Sigmoid colon (tissue), 7 donors: ENCODE measurements at regions of chr18 and their contacts with region 1.

Region 1: GRCh38 chr18:11851146-11851805 is at the start of gene CHMP1B:
- DNase-seq: peak; percentile 99
- H3K4me3 ChIP-seq: peak within 1 kb of the TSS; percentile 72 to 94 (median 88)
- H3K27ac ChIP-seq: peak within 1 kb of the TSS; percentile 93 to 99 (median 94)
- H3K4me1 ChIP-seq: peaks cover 0 to 34% (median 26%) of the 10 kb centered on the region in 4 donors
- H3K27me3 ChIP-seq: no peaks in the 10 kb centered on the region
- CTCF ChIP-seq: no peak
- EP300 ChIP-seq: peak in 2 of 4 donors; percentile 59 to 86
- POLR2A ChIP-seq: peak; percentile 98 to 99
- total RNA-seq, gene CHMP1B: 32.1 to 47.1 (median 38.2) TPM

Region 2: DNA sequence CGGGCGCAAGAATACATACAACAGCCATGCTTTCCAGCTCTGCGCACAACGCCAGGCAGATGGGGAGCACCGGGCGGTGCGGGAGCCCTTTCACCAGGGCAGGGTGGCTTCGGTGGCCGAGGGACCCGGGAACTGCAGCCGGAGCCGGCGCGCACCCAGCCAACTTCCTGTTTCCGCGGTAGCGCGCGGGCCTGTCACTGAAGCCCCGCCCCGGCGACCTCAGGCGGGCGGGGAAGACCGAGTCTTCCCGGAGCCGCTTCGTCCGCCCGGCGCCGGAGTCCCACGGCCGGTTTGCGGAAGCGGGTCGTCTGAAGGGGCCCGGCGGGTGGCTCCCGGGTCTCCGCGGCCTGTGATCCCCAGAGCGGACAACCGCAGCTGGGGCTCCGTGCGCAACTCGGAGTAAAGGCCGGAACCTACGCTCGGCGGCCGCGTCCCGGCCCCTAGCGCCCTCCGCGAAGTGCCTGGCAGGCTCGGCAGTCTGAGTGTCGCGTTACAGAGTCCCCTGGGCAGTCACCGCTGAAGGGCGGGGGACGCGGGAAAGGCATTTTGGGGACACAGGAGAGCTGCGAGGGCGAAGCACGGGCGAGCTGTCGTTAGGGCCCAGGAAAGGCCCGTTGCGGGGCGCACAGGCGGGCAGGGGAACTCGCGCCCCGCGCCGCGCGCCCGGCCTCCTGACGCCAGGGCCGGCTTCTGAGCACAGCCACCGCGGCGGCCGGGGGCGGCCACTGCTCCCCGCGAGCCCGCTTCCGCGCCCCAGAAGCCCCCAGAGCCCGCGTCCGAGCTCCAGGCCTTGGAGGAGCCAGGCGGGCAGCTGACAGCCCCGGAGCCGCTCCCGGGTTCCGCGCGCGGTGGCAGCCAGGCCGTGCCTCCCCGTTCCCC is 57.1 kb after region 1 on chr18 and contains the start of gene MPPE1:
- intact Hi-C with region 1: loop called (anchors 1 kb)
- DNase-seq: peak; percentile 94
- H3K4me3 ChIP-seq: peak within 1 kb of the TSS; percentile 64 to 88 (median 75)
- H3K27ac ChIP-seq: peak within 1 kb of the TSS; percentile 95 to 99 (median 98)
- H3K4me1 ChIP-seq: peaks cover 0 to 19% (median 18%) of the 10 kb centered on the region in 4 donors
- H3K27me3 ChIP-seq: no peaks in the 10 kb centered on the region
- CTCF ChIP-seq: no peak
- EP300 ChIP-seq: no peak
- POLR2A ChIP-seq: peak; percentile 90 to 92
- total RNA-seq, gene MPPE1: 16.4 to 32.7 (median 22.1) TPM

Region 3: GRCh38 chr18:12038639-12039417 is 187.6 kb after region 1 on chr18:
- intact Hi-C with region 1: loop called (anchors 5 kb)
- DNase-seq: peak; percentile 91
- H3K4me3 ChIP-seq: peak overlapping the region; percentile 31 to 67 (median 52)
- H3K27ac ChIP-seq: peak overlapping the region in 3 of 4 donors; percentile 29 to 54 (median 35)
- H3K4me1 ChIP-seq: peaks cover 0 to 14% (median 9%) of the 10 kb centered on the region in 4 donors
- H3K27me3 ChIP-seq: no peaks in the 10 kb centered on the region
- CTCF ChIP-seq: peak; percentile 93 to 98 (median 96)
- EP300 ChIP-seq: no peak
- POLR2A ChIP-seq: no peak

Region 4: DNA sequence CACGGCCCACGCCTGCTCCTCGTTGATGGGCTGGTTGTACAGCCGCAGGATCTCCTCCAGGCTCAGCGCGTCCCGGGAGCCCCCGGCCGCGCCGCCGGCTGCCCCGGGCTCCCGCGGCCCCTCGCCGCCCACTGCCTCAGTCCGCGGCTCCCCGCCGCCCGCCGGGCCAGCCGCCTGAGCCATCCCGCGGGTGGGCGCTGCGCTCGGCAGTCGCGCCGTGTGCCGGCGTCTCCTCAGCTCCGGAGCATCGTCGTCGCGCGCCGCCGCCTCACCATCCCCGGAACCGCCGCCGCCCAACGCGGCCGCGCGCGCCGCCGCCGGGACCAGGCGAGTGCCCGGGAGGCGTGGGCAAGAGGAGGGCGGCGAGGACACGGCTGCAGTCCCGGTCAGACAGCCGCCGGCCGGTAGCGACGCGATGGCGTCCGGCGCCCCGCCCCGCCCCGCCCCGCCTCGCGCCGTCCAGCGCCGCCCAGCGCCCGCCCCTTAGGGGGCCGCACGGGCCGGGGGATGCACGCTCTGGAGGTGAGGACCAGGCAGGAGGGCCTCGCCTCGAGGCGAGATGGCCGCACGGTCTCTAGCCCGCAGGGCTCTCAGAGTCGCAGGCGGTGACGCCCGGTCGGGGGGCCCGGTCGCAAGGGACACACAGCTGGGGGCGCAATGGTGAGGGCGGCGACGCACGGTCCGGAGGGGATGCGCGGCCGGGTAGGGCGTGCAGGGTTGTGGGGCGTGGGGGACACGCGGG is 806.6 kb after region 1 on chr18 and contains the start of gene SPIRE1:
- intact Hi-C with region 1: loop called (anchors 10 kb)
- DNase-seq: peak; percentile 86
- H3K4me3 ChIP-seq: peak within 1 kb of the TSS; percentile 72 to 92 (median 82)
- H3K27ac ChIP-seq: peak within 1 kb of the TSS; percentile 98
- H3K4me1 ChIP-seq: peaks cover 0 to 25% (median 12%) of the 10 kb centered on the region in 4 donors
- H3K27me3 ChIP-seq: no peaks in the 10 kb centered on the region
- CTCF ChIP-seq: no peak
- EP300 ChIP-seq: no peak
- POLR2A ChIP-seq: no peak
- total RNA-seq, gene SPIRE1: 22.7 to 31.6 (median 24.8) TPM

Region 5: DNA sequence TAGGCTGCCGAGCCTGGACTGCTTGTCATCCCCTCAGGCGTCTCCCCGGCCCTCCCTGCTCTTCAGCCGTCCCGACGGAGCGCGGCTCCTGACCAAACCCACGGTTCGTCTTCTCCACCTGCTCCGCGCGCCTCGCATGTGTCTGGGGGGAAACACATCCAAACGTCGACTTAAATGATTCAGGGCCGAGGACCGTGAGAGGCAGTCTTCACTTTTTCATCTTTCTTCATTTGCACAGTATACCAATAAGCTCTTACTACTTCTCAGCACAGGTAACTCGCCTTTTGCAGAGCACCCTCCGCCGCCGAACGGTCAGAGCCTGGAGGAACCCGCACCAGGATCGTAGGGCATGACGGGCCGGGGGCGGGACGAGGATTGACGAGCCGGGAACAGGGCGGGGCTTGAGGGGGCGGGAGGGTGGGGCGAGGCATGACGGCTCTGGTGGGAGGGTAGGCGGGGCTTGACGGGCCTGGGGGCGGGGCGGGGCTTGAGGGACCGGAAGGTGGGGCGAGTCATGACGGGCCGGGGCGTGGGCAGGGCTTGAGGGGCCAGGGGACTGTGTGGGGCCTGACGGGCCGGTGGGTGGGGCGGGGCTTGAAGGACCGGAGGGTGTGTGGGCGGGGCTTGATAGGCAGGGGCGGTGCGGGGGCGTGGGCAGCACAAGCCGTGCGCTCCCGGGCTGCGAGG is 1096.2 kb after region 1 on chr18 and contains the start of gene SEH1L:
- intact Hi-C with region 1: loop called (anchors 5 kb)
- DNase-seq: peak; percentile 100
- H3K4me3 ChIP-seq: peak within 1 kb of the TSS; percentile 55 to 72 (median 64)
- H3K27ac ChIP-seq: peak within 1 kb of the TSS; percentile 94 to 99 (median 98)
- H3K4me1 ChIP-seq: peaks cover 0 to 24% (median 16%) of the 10 kb centered on the region in 4 donors
- H3K27me3 ChIP-seq: no peaks in the 10 kb centered on the region
- CTCF ChIP-seq: no peak
- EP300 ChIP-seq: no peak
- POLR2A ChIP-seq: peak; percentile 52 to 56
- total RNA-seq, gene SEH1L: 15.3 to 38.1 (median 20.3) TPM